ENCODE measurements at regions of chr9 and their contacts with region 1.

Region 1: GRCh38 chr9:35096035-35096849 is at the start of gene PIGO:
- DNase-seq: peak; percentile 92
- H3K4me3 ChIP-seq: peak within 1 kb of the TSS; percentile 84 to 99
- H3K27ac ChIP-seq: peak within 1 kb of the TSS; percentile 95 to 96
- H3K4me1 ChIP-seq: peaks cover 5 to 11% of the 10 kb centered on the region in 2 experiments; a peak in 1 of 4 replicates
- H3K27me3 ChIP-seq: no peaks in the 10 kb centered on the region
- CTCF ChIP-seq: peak; percentile 81
- EP300 ChIP-seq: no peak; a peak in 1 of 4 replicates
- RAD21 ChIP-seq: peak; percentile 63
- polyA plus RNA-seq, gene PIGO: 31.0 and 38.5 TPM in 2 replicates

Region 2: GRCh38 chr9:34500623-34501267 is 595.5 kb before region 1 on chr9:
- CTCF ChIA-PET with region 1: no interaction called
- POLR2A ChIA-PET with region 1: no interaction called
- DNase-seq: peak; percentile 79
- H3K4me3 ChIP-seq: no peak overlapping the region
- H3K27ac ChIP-seq: no peak overlapping the region
- H3K4me1 ChIP-seq: peaks cover 0 to 6% of the 10 kb centered on the region in 2 experiments; a peak in 1 of 4 replicates
- H3K27me3 ChIP-seq: no peaks in the 10 kb centered on the region
- CTCF ChIP-seq: peak; percentile 97
- EP300 ChIP-seq: no peak
- RAD21 ChIP-seq: peak; percentile 93

Region 3: DNA sequence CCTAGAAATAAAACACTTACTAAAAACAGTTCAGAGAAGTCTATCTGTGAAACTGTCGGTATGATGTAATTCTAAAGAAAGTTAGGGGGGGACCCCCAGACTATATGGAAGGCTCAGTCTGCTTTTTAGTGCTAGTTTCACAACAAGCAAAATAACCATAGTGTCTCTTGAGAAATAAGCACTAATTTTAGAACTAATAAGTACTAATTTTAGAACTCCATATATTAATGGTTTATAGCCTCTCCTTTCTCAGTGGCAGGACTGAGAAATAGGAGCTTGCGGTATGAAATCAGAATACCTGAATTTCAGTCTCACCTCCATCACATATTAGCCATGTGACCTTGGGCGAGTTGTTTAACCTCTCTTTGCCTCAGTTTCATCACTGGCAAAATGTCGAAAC is 139.6 kb before region 1 on chr9:
- CTCF ChIA-PET with region 1: no interaction called
- POLR2A ChIA-PET with region 1: no interaction called
- DNase-seq: no peak
- H3K4me3 ChIP-seq: no peak overlapping the region
- H3K27ac ChIP-seq: no peak overlapping the region
- H3K4me1 ChIP-seq: peaks cover 0 to 3% of the 10 kb centered on the region in 2 experiments; a peak in 1 of 4 replicates
- H3K27me3 ChIP-seq: peaks cover 46% of the 10 kb centered on the region
- CTCF ChIP-seq: no peak
- EP300 ChIP-seq: no peak
- RAD21 ChIP-seq: no peak

Region 4: DNA sequence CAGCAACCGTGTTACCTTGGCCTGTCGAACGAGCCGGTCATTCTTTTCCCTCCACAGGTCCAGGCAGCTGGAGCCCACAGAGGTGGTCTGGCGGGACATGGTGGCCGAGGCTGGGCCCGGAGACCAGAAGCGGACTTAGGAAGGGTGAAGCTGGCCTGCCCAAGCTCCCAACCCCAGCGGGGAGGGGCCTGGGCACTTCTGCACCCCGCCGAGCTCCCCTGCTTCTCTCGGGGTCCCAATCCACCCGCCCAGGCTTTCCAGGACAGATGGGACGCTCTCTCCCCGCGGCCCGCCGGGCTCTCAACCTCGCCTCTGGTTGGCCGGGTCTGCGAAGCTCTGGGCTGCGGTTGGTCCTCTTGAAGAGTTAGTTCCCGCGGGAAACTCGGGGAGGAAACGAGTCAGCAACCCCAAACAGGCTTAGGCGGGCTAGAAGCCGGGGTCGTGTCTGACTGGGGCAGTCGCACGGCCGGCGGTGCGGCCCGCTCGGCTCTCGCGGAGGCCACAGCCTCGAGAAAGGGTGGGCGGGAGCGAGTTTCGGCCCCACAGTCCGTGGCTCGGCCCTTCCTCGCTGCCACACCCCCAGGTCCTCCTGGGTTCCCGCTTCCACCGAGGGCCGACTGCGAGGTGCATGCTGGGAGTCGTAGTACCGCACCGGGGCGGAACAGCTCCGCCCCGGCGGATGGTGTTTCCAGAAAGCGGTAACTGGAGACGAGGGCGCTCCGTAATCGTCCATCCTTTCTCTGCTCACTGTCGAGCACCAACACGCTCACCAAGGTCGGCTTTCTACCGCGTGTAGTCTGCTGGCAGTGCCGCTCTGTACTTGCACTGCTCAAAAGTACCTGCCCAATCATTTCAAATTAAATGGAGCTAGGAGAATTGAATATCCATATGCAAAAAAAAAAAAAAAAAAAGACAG is 16.6 kb before region 1 on chr9 and contains the start of gene FANCG:
- CTCF ChIA-PET with region 1: interaction called, 55 read pairs
- POLR2A ChIA-PET with region 1: interaction called, 18 read pairs
- DNase-seq: peak; percentile 94
- H3K4me3 ChIP-seq: peak within 1 kb of the TSS; percentile 68 to 74
- H3K27ac ChIP-seq: peak within 1 kb of the TSS; percentile 64 to 88
- H3K4me1 ChIP-seq: peaks cover 11 to 13% of the 10 kb centered on the region in 2 experiments; a peak in 1 of 4 replicates
- H3K27me3 ChIP-seq: no peaks in the 10 kb centered on the region
- CTCF ChIP-seq: no peak
- EP300 ChIP-seq: no peak
- RAD21 ChIP-seq: no peak
- polyA plus RNA-seq, gene FANCG: 25.1 and 25.6 TPM in 2 replicates

Region 5: GRCh38 chr9:35085078-35085477 is 11.2 kb before region 1 on chr9:
- CTCF ChIA-PET with region 1: interaction called, 55 read pairs
- POLR2A ChIA-PET with region 1: interaction called, 18 read pairs
- DNase-seq: no peak
- H3K4me3 ChIP-seq: no peak overlapping the region
- H3K27ac ChIP-seq: no peak overlapping the region
- H3K4me1 ChIP-seq: no peaks in the 10 kb centered on the region
- H3K27me3 ChIP-seq: no peaks in the 10 kb centered on the region
- CTCF ChIP-seq: no peak
- EP300 ChIP-seq: no peak
- RAD21 ChIP-seq: no peak

Region 6: DNA sequence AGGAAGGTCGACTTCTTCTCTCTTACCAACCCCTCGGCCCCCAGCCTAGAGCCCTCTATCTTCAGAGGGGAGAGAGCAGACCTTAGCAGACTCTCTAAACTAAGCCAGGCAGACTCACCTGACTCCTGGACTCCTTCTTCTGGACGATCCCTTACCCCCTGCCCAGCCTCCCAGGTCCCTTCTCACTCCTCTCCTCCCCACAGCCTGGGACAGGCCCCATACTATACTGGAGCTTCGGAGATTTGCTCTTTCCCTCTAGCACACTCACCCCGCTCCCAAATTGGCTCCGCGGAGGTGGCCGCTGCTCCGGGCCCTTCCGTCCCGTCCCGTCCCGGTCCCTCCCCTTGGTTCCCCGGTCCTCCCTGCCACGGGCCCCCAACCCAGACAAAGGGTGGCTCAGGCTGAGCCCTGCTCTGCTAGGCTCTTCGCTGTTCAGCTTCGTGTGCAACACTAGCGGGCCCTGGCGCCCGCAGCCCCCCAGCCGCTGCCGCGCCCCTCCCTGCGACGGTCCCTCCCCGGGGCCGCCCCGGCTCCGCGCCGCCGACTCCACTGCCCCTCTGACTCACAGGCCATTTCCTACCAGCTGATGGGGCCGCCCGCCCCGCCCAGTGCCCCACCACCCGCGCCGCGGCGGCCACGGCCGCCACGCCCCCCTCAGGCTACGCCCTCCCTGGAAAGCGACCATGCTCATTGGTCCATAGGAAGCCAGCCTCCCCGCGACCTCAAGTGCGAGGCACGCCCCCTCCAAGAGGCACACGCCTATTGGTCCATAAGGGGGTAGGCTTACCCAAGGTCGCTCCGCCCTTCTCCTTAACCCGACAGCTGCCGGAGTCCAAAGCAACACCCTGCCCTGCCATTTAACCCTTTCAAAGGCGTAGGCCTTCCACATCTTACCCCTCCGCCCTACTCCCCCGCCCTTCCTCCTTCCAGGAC is 15.0 kb after region 1 on chr9:
- CTCF ChIA-PET with region 1: interaction called, 25 read pairs
- POLR2A ChIA-PET with region 1: interaction called, 3 read pairs
- DNase-seq: peak; percentile 96
- H3K4me3 ChIP-seq: peak overlapping the region; percentile 92 to 95
- H3K27ac ChIP-seq: peak overlapping the region; percentile 75 to 97
- H3K4me1 ChIP-seq: peaks cover 35 to 42% of the 10 kb centered on the region in 2 experiments
- H3K27me3 ChIP-seq: no peaks in the 10 kb centered on the region
- CTCF ChIP-seq: no peak
- EP300 ChIP-seq: no peak
- RAD21 ChIP-seq: no peak

Measured in SK-N-SH (cell line).